ENCODE measurements at regions of chr17 and their contacts with region 1.

Region 1: GRCh38 chr17:39828443-39828842 is 35.7 kb downstream of the IKZF3 start:
- DNase-seq: peak; percentile 100
- H3K4me3 Mint-ChIP-seq: peak overlapping the region; percentile 36
- H3K27ac Mint-ChIP-seq: peak overlapping the region; percentile 48
- H3K4me1 Mint-ChIP-seq: peaks cover 17% of the 10 kb centered on the region
- H3K27me3 Mint-ChIP-seq: no peaks in the 10 kb centered on the region
- CTCF ChIP-seq: no peak

Region 2: GRCh38 chr17:39648616-39649366 is 179.7 kb before region 1 on chr17:
- CTCF ChIA-PET with region 1: interaction called, 115 read pairs
- intact Hi-C with region 1: no loop called
- DNase-seq: peak; percentile 76
- H3K4me3 Mint-ChIP-seq: no peak overlapping the region
- H3K27ac Mint-ChIP-seq: no peak overlapping the region
- H3K4me1 Mint-ChIP-seq: peaks cover 33% of the 10 kb centered on the region
- H3K27me3 Mint-ChIP-seq: no peaks in the 10 kb centered on the region
- CTCF ChIP-seq: no peak

Region 3: DNA sequence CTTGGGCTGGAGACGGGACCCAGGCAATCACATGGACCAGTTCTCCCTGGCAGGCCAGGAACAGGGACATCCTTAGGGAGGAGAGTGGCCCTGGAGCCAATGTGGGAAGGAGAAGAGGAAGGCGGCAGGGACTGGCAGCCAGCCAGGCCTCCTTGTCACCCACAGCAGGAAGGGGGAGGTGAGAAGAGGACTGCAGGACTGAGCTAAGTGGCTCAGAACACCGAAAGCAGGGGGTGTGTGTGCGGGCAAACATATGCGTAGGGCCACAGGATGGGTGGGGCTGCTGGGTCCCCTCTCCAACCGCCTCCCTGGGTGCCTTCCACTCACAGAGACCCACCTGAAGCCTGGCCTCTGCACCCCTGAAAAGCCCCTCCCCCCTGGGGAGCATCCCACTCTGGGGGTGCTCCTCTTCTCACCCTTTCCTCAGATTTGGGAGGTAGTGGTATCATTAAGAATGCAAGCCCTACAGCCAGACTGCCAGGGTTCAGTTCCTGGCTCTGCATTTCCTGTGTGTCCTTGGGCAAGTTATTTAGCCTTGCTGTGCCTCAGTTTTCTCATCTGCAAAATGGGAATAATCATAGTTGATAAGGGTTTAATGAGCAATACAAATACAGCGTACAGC is 152.1 kb before region 1 on chr17:
- CTCF ChIA-PET with region 1: interaction called, 127 read pairs
- intact Hi-C with region 1: no loop called
- DNase-seq: peak; percentile 100
- H3K4me3 Mint-ChIP-seq: peak overlapping the region; percentile 3
- H3K27ac Mint-ChIP-seq: peak overlapping the region; percentile 62
- H3K4me1 Mint-ChIP-seq: peaks cover 91% of the 10 kb centered on the region
- H3K27me3 Mint-ChIP-seq: peaks cover 6% of the 10 kb centered on the region
- CTCF ChIP-seq: no peak

Region 4: DNA sequence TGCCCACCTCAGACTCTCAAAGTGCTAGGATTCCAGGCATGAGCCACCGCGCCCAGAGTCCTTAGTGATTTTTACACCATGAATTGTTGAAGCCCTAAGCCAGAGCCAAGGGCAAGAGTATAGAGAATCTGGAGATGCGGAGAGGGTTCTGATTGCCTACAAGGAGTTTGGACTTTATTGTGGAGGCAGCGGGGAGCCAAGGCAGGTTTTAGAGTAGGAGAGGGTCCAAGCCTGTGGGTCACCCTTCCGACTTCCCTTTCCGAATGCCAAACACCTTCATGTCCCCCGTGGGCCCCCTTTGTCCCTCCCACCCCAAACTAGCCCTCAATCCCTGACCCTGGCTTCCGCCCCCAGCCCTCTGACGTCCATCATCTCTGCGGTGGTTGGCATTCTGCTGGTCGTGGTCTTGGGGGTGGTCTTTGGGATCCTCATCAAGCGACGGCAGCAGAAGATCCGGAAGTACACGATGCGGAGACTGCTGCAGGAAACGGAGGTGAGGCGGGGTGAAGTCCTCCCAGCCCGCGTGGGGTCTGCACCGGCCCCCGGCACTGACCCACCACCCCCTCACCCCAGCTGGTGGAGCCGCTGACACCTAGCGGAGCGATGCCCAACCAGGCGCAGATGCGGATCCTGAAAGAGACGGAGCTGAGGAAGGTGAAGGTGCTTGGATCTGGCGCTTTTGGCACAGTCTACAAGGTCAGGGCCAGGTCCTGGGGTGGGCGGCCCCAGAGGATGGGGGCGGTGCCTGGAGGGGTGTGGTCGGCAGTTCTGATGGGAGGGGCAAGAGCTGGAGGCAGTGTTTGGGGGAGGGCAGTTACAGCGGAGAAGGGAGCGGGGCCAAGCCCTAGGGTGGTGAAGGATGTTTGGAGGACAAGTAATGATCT is 105.2 kb before region 1 on chr17:
- CTCF ChIA-PET with region 1: interaction called, 1,211 read pairs
- intact Hi-C with region 1: no loop called
- DNase-seq: peak; percentile 75
- H3K4me3 Mint-ChIP-seq: peak overlapping the region; percentile 0
- H3K27ac Mint-ChIP-seq: peak overlapping the region; percentile 28
- H3K4me1 Mint-ChIP-seq: peaks cover 38% of the 10 kb centered on the region
- H3K27me3 Mint-ChIP-seq: no peaks in the 10 kb centered on the region
- CTCF ChIP-seq: no peak

Region 5: GRCh38 chr17:39852239-39852638 is 23.8 kb after region 1 on chr17:
- CTCF ChIA-PET with region 1: interaction called, 809 read pairs
- intact Hi-C with region 1: loop called (anchors 1 kb)
- DNase-seq: peak; percentile 59
- H3K4me3 Mint-ChIP-seq: no peak overlapping the region
- H3K27ac Mint-ChIP-seq: no peak overlapping the region
- H3K4me1 Mint-ChIP-seq: peaks cover 10% of the 10 kb centered on the region
- H3K27me3 Mint-ChIP-seq: no peaks in the 10 kb centered on the region
- CTCF ChIP-seq: no peak

Region 6: GRCh38 chr17:39939588-39940419 is 111.4 kb after region 1 on chr17:
- CTCF ChIA-PET with region 1: interaction called, 1,809 read pairs
- intact Hi-C with region 1: no loop called
- DNase-seq: peak; percentile 76
- H3K4me3 Mint-ChIP-seq: no peak overlapping the region
- H3K27ac Mint-ChIP-seq: no peak overlapping the region
- H3K4me1 Mint-ChIP-seq: peaks cover 12% of the 10 kb centered on the region
- H3K27me3 Mint-ChIP-seq: peaks cover 63% of the 10 kb centered on the region
- CTCF ChIP-seq: no peak

Measured in Calu3 (cell line).